Activated naive CD8-positive, alpha-beta T cell treated with anti-CD3 and anti-CD28 coated beads, Interleukin-2, amount 10 ng/mL, durations not matched to agents 7 days and 5 days (primary cell): ENCODE measurements at regions of chr17 and their contacts with region 1.

Region 1: GRCh38 chr17:63697341-63698286 is 2.3 kb downstream of the LIMD2 start:
- DNase-seq: peak; percentile 85
- ATAC-seq: peak; percentile 35
- H3K4me3 Mint-ChIP-seq: peak overlapping the region; percentile 98
- H3K27ac Mint-ChIP-seq: peak overlapping the region; percentile 99
- H3K4me1 Mint-ChIP-seq: peaks cover 42% of the 10 kb centered on the region
- H3K27me3 Mint-ChIP-seq: no peaks in the 10 kb centered on the region

Region 2: DNA sequence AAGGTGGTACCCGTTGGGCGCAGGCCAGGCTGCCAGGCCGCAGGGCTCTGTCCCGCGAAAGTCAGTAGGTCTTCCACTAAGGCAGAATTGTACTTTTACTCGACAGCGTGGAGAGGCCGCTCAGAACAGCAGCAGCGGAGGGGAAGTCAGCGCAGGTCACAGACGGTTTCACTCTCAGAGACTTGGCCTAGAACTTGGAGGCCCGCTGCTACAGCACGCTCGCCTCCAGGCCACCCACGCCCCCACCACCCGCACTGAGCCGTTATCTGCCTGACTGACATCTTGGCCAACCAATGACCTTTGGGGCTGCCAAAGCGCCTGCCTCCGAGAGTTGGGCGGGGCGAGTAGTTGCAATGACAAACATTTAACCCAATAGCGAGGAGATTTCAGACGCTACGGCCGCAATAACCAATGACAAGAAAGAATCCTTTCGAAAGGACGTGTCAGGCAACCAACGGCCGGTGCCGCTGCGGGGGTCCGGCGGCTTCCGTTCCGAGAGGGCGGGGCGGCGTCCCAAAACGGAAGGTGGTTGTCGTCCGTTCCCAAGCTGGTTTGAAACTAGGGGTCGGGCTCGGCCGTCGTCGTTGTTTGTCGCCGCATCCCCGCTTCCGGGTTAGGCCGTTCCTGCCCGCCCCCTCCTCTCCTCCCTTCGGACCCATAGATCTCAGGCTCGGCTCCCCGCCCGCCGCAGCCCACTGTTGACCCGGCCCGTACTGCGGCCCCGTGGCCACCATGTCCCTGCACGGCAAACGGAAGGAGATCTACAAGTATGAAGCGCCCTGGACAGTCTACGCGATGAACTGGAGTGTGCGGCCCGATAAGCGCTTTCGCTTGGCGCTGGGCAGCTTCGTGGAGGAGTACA is 147.4 kb before region 1 on chr17 and contains the start of gene DCAF7:
- POLR2A ChIA-PET with region 1: interaction called, 10 read pairs
- DNase-seq: peak; percentile 96
- ATAC-seq: peak; percentile 95
- H3K4me3 Mint-ChIP-seq: peak within 1 kb of the TSS; percentile 90
- H3K27ac Mint-ChIP-seq: peak within 1 kb of the TSS; percentile 97
- H3K4me1 Mint-ChIP-seq: peaks cover 19% of the 10 kb centered on the region
- H3K27me3 Mint-ChIP-seq: no peaks in the 10 kb centered on the region
- total RNA-seq, gene DCAF7: 113 TPM

Region 3: GRCh38 chr17:63685041-63685440 is 12.6 kb before region 1 on chr17:
- POLR2A ChIA-PET with region 1: interaction called, 14 read pairs
- DNase-seq: no peak
- ATAC-seq: no peak
- H3K4me3 Mint-ChIP-seq: no peak overlapping the region
- H3K27ac Mint-ChIP-seq: no peak overlapping the region
- H3K4me1 Mint-ChIP-seq: peaks cover 3% of the 10 kb centered on the region
- H3K27me3 Mint-ChIP-seq: no peaks in the 10 kb centered on the region

Region 4: DNA sequence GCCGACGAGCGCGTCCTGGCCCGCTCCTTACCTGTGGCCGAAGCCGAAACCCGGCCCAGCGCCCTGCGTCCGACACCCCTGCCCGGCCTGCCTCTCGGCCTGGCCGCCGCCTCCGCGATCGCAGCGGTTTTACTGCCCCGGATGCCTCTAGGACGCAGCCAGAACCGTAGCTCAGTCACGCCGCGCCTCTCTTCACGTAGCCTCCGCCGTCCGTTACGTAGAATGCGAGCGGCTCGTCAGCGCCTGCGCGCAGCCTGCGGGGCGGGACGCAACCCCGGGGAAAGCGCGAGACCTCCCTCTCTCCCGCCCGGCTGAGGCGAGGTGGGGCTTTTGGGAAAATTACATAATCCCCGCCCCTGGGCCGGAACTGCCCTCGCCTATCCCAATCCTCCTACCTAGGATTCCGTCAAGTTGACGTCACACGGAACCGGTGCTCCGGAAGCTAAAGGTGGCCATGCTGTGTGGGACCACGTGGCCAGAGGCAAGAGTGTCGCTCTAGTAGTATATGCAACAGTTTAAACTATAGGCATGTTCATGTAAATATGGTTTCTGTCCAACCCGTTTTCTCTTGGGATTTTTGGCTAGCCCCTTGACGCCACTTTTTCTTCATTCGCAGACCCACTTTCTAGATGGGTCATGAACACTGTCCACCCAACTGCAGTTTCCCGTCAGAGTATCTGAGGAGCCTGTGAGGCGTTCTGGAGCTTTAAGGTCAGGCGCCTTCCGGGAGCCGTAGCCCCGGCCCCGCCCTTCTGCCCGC is 75.9 kb after region 1 on chr17 and contains the start of gene CCDC47:
- POLR2A ChIA-PET with region 1: interaction called, 64 read pairs
- DNase-seq: peak; percentile 97
- ATAC-seq: peak; percentile 87
- H3K4me3 Mint-ChIP-seq: peak within 1 kb of the TSS; percentile 91
- H3K27ac Mint-ChIP-seq: peak within 1 kb of the TSS; percentile 97
- H3K4me1 Mint-ChIP-seq: peaks cover 33% of the 10 kb centered on the region
- H3K27me3 Mint-ChIP-seq: no peaks in the 10 kb centered on the region
- total RNA-seq, gene CCDC47: 47.0 to 54.8 TPM

Region 5: DNA sequence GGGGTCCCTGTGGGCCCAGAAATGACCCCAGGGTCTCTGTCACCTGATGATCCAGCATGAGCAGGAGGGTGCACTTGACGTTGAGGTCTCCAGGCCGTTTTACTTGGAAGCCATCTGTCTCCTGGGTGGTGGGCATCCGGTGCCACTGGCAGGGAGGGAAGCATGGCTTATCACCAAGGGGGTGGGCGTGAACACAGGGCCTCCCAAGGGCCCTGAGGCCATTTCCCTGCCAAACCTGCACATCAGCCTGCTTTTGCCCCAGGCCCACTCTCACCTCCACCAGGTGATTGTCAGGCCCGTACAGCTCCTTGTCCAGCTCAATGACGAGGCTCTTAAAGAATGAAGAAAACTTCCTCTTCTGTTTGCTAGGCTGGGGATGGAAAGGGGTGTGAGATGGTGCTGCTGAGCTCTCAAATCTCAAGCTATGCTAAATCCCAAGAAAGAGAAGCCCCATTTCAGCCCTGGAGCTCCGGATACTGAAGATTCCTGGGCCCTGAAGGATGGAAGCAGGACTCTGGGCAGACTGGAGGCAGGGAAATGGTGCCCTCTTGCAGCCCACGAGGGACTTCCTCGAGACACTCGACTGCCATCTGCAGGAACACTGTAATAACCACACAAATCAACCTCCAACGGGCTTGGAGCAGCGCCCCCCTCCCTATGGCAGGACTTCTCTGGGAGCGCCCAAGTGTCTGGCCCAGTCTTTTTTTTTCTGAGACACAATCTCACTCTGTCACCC is 137.0 kb after region 1 on chr17:
- POLR2A ChIA-PET with region 1: interaction called, 24 read pairs
- DNase-seq: no peak
- ATAC-seq: peak; percentile 77
- H3K4me3 Mint-ChIP-seq: no peak overlapping the region
- H3K27ac Mint-ChIP-seq: peak overlapping the region; percentile 67
- H3K4me1 Mint-ChIP-seq: peaks cover 34% of the 10 kb centered on the region
- H3K27me3 Mint-ChIP-seq: no peaks in the 10 kb centered on the region

Region 6: GRCh38 chr17:64174686-64175456 is 477.3 kb after region 1 on chr17:
- POLR2A ChIA-PET with region 1: no interaction called
- DNase-seq: no peak
- ATAC-seq: no peak
- H3K4me3 Mint-ChIP-seq: no peak overlapping the region
- H3K27ac Mint-ChIP-seq: no peak overlapping the region
- H3K4me1 Mint-ChIP-seq: no peaks in the 10 kb centered on the region
- H3K27me3 Mint-ChIP-seq: no peaks in the 10 kb centered on the region